PC-9 (cell line): ENCODE measurements at regions of chr9 and their contacts with region 1.

Region 1: DNA sequence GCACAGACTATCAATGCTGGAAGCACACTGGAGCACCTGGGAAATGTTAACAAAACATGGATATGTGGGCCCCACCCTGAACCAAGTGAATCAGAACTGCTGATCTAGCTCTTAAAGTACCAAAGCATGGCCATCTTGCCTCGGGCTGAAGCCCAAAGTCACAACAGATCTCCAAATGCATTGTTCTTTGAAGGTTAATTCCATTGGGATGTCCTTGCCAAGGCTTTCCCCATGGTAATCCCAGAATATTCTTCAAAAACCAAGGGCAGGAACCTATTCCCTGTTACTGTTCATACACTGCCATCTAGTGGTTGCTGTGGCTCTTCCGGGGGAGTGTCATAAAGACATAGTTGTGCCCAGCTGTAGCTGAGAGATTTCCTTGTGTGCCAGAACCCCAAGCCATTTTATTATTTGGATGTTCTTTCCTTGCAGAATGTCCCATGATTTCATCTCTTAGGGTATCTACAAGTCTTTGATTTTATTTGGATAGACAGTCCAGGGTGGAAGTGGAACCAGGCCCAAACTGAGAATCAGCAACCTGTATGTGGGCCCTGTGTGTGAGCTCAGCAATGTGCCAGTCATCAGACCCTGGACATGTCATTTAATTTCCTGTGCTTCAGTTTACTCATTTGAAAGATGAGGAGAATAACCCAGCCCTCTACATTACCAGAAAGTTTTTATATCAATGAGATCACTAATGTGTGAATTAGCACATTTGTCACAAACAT is 290.0 kb downstream of the ACTL7B start:
- DNase-seq: peak; percentile 62 to 77
- H3K4me3 ChIP-seq: no peak overlapping the region
- H3K27ac ChIP-seq: no peak overlapping the region
- H3K4me1 ChIP-seq: no peaks in the 10 kb centered on the region
- H3K27me3 ChIP-seq: no peaks in the 10 kb centered on the region
- CTCF ChIP-seq: peak; percentile 92

Region 2: DNA sequence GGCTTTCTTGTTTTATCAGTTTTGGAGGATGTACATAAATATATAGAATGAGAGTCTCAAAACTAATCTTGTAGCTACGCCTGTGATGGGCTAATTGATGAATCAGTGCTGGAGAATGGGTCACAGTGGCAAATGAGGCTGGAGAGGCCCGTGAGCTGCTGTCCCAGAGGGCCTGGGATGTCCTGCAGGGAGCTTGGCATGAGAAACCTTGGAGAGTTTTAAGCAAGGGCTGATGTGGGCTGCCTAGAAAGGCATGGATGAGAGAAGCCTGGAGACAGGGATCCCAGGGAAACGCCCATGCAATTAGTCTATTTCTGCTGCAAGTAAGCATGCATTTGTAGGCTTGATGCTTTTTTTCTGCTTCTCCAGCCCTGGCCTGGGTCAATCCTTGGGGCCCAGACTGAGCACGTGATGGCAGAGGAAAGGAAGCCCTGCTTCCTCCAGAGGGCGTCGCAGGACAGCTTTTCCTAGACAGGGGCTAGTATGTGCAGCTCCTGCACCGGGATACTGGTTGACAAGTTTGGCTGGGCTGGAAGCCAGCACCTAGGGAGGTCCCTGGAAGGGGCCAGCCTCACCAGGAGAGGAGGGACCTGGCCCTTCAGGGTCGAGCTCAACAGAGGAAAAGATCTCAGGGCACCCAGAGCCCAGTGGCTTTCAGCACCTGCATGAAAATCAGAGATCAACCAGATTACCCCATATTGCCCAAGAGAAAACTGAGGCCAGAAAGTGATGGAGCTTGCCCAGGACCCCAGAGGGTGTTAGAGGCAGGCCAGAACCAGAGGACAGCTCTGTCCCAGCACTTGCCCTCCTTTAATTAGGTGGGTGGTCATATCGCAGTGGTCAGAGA is 1143.6 kb before region 1 on chr9:
- CTCF ChIA-PET with region 1: no interaction called
- POLR2A ChIA-PET with region 1: no interaction called
- intact Hi-C with region 1: loop called (anchors 1 kb)
- DNase-seq: peak; percentile 65 to 79
- H3K4me3 ChIP-seq: no peak overlapping the region
- H3K27ac ChIP-seq: no peak overlapping the region
- H3K4me1 ChIP-seq: no peaks in the 10 kb centered on the region
- H3K27me3 ChIP-seq: no peaks in the 10 kb centered on the region
- CTCF ChIP-seq: peak; percentile 88

Region 3: DNA sequence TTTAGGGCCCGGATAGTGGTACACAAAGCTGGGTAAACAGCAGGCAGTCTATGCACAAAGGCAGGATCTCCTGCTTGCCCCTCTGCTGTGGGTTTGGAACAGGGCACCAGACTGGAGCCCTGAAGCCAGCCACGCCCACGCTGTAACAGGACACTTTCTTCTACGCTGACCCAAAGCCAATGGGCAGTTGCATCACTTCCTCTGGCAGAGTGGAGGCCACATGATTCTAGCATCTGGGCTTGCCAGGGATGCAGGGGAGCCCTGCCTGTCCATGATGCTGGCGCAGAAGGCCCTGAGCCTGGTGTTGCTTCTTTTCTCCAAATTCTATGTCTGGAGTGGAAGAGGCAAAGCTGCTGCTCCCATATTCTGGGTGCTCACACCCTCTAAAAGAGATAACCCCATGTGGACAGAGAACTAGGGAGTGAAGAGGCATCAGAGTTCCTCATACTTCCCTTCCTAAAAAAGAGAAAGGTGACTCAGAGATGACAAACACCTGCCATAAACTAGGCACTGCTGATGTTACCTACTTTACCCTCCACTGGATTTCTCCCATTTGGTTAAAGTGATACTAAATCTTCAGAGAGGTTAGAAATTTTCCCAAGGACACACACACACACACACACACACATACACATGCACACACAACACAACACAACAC is 815.9 kb before region 1 on chr9:
- CTCF ChIA-PET with region 1: interaction called, 3 read pairs
- POLR2A ChIA-PET with region 1: no interaction called
- intact Hi-C with region 1: loop called (anchors 2 kb)
- DNase-seq: peak; percentile 86 to 87
- H3K4me3 ChIP-seq: peak overlapping the region; percentile 25; the same call in 1 of the 2 replicates
- H3K27ac ChIP-seq: peak overlapping the region; percentile 99
- H3K4me1 ChIP-seq: peaks cover 62% of the 10 kb centered on the region
- H3K27me3 ChIP-seq: no peaks in the 10 kb centered on the region
- CTCF ChIP-seq: no peak

Region 4: GRCh38 chr9:108182950-108183381 is 382.8 kb before region 1 on chr9:
- CTCF ChIA-PET with region 1: no interaction called
- POLR2A ChIA-PET with region 1: no interaction called
- intact Hi-C with region 1: loop called (anchors 10 kb)
- DNase-seq: no peak
- H3K4me3 ChIP-seq: no peak overlapping the region
- H3K27ac ChIP-seq: no peak overlapping the region
- H3K4me1 ChIP-seq: no peaks in the 10 kb centered on the region
- H3K27me3 ChIP-seq: no peaks in the 10 kb centered on the region
- CTCF ChIP-seq: no peak

Region 5: GRCh38 chr9:108468402-108468801 is 97.4 kb before region 1 on chr9:
- CTCF ChIA-PET with region 1: no interaction called
- POLR2A ChIA-PET with region 1: no interaction called
- intact Hi-C with region 1: loop called (anchors 2 kb)
- DNase-seq: peak in 1 of 2 experiments; percentile 30
- H3K4me3 ChIP-seq: no peak overlapping the region
- H3K27ac ChIP-seq: no peak overlapping the region
- H3K4me1 ChIP-seq: peaks cover 22% of the 10 kb centered on the region
- H3K27me3 ChIP-seq: no peaks in the 10 kb centered on the region
- CTCF ChIP-seq: peak; percentile 64

Region 6: DNA sequence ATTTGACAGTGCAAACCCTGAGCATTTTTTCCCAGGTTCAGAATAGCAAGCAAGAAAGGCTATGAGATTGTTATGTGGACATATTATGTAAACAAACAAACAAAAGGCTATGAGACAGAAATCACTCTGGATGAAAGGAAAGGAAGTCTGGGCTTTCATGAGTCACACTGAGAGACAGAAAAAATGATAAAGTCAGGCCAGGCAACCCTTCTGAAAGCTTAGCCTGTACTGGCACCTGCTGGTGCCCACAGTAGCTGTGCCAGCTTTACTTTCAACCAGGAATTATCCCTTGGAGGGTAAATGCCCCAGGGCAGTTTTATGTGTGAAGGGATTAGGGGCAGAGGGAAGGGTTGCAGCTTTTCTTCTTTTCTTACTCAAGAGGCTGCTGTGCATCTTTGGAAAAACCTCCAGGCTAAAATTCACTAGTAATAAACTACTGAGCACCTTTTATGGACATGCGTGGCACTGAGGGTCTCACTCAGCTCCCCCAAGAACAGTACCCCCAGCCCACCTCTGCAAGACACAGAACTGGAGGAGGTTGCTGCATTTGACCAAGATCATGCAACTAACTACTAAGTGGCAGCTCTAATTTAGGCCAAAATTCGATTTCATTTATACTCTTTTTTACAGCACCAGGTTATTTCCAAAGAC is 248.3 kb after region 1 on chr9:
- CTCF ChIA-PET with region 1: interaction called, 5 read pairs
- POLR2A ChIA-PET with region 1: no interaction called
- intact Hi-C with region 1: loop called (anchors 5 kb)
- DNase-seq: peak; percentile 73 to 90
- H3K4me3 ChIP-seq: no peak overlapping the region
- H3K27ac ChIP-seq: 0 out of 2 replicates have a peak overlapping the region, but pooled peaks have one; percentile 35
- H3K4me1 ChIP-seq: peaks cover 20% of the 10 kb centered on the region
- H3K27me3 ChIP-seq: no peaks in the 10 kb centered on the region
- CTCF ChIP-seq: peak; percentile 87